Naive thymus-derived CD4-positive, alpha-beta T cell (primary cell): ENCODE measurements at regions of chr11 and their contacts with region 1.

Region 1: GRCh38 chr11:31369348-31370329 is at the starts of genes DCDC1 and DNAJC24:
- DNase-seq: peak; percentile 84 to 90 (median 89)
- ATAC-seq: peak; percentile 99
- H3K4me3 ChIP-seq: peak within 1 kb of the TSS; percentile 96
- H3K4me3 Mint-ChIP-seq: peak within 1 kb of the TSS; percentile 93 to 100 (median 98)
- H3K27ac ChIP-seq: peak within 1 kb of the TSS; percentile 81
- H3K27ac Mint-ChIP-seq: peak within 1 kb of the TSS; percentile 90 to 97 (median 95)
- H3K4me1 ChIP-seq: peaks cover 21 to 31% of the 10 kb centered on the region in 2 donors
- H3K4me1 Mint-ChIP-seq: peaks cover 28 to 82% (median 66%) of the 10 kb centered on the region in 7 donors
- H3K27me3 ChIP-seq: no peaks in the 10 kb centered on the region
- H3K27me3 Mint-ChIP-seq: peaks cover 0 to 18% (median 0%) of the 10 kb centered on the region in 5 donors
- total RNA-seq, gene DCDC1: 0.13 to 0.81 (median 0.26) TPM in 4 of 5 experiments, not detected in the other
- total RNA-seq, gene DNAJC24: 12.2 to 26.3 (median 18.6) TPM

Region 2: DNA sequence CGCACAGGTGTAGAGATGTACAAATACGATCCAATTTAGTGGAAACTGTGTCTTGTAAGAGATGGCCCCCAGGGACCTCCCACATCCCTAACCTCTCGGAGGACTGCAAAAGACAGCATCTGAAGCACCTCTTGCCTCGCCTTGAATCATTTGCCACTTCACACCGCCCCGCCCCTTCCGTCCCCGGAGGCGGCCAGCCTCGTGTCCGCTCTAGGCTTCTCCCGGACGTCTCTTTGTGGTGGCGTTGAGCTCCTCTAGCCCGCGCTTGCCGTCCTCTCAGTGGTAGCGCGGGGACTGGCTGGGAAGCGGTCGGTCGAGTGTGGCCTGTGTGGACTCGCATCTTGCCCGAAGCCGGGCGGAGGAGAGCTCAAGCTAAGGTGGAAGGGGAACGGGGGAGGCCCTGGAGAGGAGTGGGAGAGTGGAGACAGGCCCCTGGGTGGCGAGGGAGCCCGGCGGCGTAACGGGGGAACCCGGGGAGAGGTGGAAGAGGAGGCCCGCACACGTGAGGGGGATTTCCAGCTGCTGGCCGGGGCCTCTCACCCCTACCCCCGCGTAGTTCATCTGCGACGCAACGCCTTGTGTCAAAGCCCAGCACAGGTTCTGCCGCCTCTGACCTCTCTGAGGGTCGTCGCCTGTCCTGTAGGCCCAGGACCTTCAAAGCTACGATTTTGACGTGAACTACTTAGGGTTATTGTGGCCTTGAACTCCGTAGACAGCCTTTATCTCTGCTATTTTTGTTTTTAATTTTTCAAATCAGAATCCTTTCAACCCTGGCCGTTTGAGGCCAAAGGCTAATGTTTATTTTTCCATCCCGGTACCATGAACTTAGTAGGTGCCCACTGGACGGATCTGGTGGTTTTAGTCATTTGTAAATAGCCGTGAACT is 1046.6 kb before region 1 on chr11 and contains the start of gene ARL14EP:
- CTCF ChIA-PET with region 1: no interaction called
- POLR2A ChIA-PET with region 1: no interaction called
- intact Hi-C with region 1: loop called (anchors 1 to 5 kb)
- DNase-seq: peak; percentile 72 to 88 (median 81)
- ATAC-seq: peak; percentile 94
- H3K4me3 ChIP-seq: peak within 1 kb of the TSS; percentile 77
- H3K4me3 Mint-ChIP-seq: peak within 1 kb of the TSS; percentile 92 to 100 (median 99)
- H3K27ac ChIP-seq: peak within 1 kb of the TSS; percentile 90
- H3K27ac Mint-ChIP-seq: peak within 1 kb of the TSS; percentile 97 to 100 (median 98)
- H3K4me1 ChIP-seq: peaks cover 28 to 32% of the 10 kb centered on the region in 2 donors
- H3K4me1 Mint-ChIP-seq: peaks cover 32 to 59% (median 55%) of the 10 kb centered on the region in 7 donors
- H3K27me3 ChIP-seq: no peaks in the 10 kb centered on the region
- H3K27me3 Mint-ChIP-seq: peaks cover 0 to 19% (median 14%) of the 10 kb centered on the region in 5 donors
- total RNA-seq, gene ARL14EP: 20.8 to 45.8 (median 43.5) TPM

Region 3: DNA sequence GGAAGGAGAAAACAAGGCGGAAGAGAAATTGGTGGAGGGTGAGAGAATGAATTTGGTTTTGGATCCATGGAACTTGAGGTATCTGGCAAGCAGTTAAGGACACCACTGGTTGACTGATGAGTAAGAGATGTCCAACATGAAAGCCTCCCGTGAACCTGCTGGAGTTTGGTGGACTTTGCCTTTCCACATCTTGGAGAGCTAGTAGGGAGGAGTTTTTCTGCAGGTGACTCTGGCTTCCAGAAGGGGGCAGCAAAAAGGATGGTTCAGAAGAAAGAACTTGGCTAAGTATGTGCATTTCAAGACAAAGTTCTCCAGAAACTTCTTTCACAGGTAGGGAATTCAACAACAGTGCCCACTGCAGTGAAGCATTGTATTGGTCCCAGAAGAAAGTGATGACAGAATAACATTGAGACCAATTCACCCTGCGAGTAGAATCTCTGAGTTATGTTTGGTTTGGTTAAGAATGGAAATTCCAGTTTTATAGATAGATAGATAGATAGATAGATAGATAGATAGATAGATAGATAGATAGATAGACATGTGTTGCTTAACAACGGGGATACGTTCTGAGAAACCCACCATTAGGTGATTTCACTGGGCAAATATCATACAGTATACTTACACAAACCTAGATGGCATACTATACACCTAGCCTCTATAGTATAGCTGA is 28.6 kb before region 1 on chr11:
- CTCF ChIA-PET with region 1: interaction called, 7 read pairs
- POLR2A ChIA-PET with region 1: interaction called, 4 read pairs
- intact Hi-C with region 1: loop called in 1 of 2 experiments (anchors 1 kb)
- DNase-seq: peak in 5 of 9 donors; percentile 9 to 24 (median 13)
- ATAC-seq: no peak
- H3K4me3 ChIP-seq: no peak overlapping the region
- H3K4me3 Mint-ChIP-seq: no peak overlapping the region
- H3K27ac ChIP-seq: no peak overlapping the region
- H3K27ac Mint-ChIP-seq: no peak overlapping the region
- H3K4me1 ChIP-seq: no peaks in the 10 kb centered on the region
- H3K4me1 Mint-ChIP-seq: peaks cover 0 to 3% (median 0%) of the 10 kb centered on the region in 7 donors
- H3K27me3 ChIP-seq: no peaks in the 10 kb centered on the region
- H3K27me3 Mint-ChIP-seq: peaks cover 5 to 27% (median 18%) of the 10 kb centered on the region in 5 donors

Region 4: GRCh38 chr11:31509429-31510345 is 140.0 kb after region 1 on chr11 and contains the starts of genes ELP4 and IMMP1L:
- CTCF ChIA-PET with region 1: no interaction called
- POLR2A ChIA-PET with region 1: interaction called, 4 read pairs
- intact Hi-C with region 1: loop called (anchors 1 kb)
- DNase-seq: peak; percentile 86 to 97 (median 95)
- ATAC-seq: peak; percentile 100
- H3K4me3 ChIP-seq: peak within 1 kb of the TSS; percentile 85
- H3K4me3 Mint-ChIP-seq: peak within 1 kb of the TSS; percentile 89 to 100 (median 99)
- H3K27ac ChIP-seq: peak within 1 kb of the TSS; percentile 79
- H3K27ac Mint-ChIP-seq: peak within 1 kb of the TSS; percentile 92 to 100 (median 98)
- H3K4me1 ChIP-seq: peaks cover 13 to 14% of the 10 kb centered on the region in 2 donors
- H3K4me1 Mint-ChIP-seq: peaks cover 21 to 70% (median 49%) of the 10 kb centered on the region in 7 donors
- H3K27me3 ChIP-seq: no peaks in the 10 kb centered on the region
- H3K27me3 Mint-ChIP-seq: peaks cover 0 to 2% (median 0%) of the 10 kb centered on the region in 5 donors
- total RNA-seq, gene ELP4: 16.8 to 23.2 (median 21.2) TPM
- total RNA-seq, gene IMMP1L: 9.4 to 20.0 (median 16.1) TPM

Region 5: GRCh38 chr11:32090545-32091373 is 721.1 kb after region 1 on chr11 and contains the start of gene RCN1:
- CTCF ChIA-PET with region 1: no interaction called
- POLR2A ChIA-PET with region 1: no interaction called
- intact Hi-C with region 1: loop called (anchors 1 to 2 kb)
- DNase-seq: peak in 3 of 9 donors; percentile 14 to 64 (median 54)
- ATAC-seq: peak; percentile 66
- H3K4me3 ChIP-seq: peak within 1 kb of the TSS; percentile 83
- H3K4me3 Mint-ChIP-seq: peak within 1 kb of the TSS; percentile 74 to 89 (median 84)
- H3K27ac ChIP-seq: peak within 1 kb of the TSS; percentile 81
- H3K27ac Mint-ChIP-seq: peak within 1 kb of the TSS; percentile 74 to 90 (median 83)
- H3K4me1 ChIP-seq: peaks cover 4 to 8% of the 10 kb centered on the region in 2 donors
- H3K4me1 Mint-ChIP-seq: peaks cover 12 to 36% (median 24%) of the 10 kb centered on the region in 7 donors
- H3K27me3 ChIP-seq: peaks cover 0 to 4% of the 10 kb centered on the region in 2 donors
- H3K27me3 Mint-ChIP-seq: peaks cover 5 to 19% (median 16%) of the 10 kb centered on the region in 5 donors
- total RNA-seq, gene RCN1: 5.5 to 26.8 (median 9.6) TPM

Region 6: GRCh38 chr11:32858731-32859130 is 1489.1 kb after region 1 on chr11:
- CTCF ChIA-PET with region 1: no interaction called
- POLR2A ChIA-PET with region 1: no interaction called
- intact Hi-C with region 1: no loop called
- DNase-seq: no peak
- ATAC-seq: no peak
- H3K4me3 ChIP-seq: no peak overlapping the region
- H3K4me3 Mint-ChIP-seq: no peak overlapping the region
- H3K27ac ChIP-seq: no peak overlapping the region
- H3K27ac Mint-ChIP-seq: no peak overlapping the region
- H3K4me1 ChIP-seq: no peaks in the 10 kb centered on the region
- H3K4me1 Mint-ChIP-seq: peaks cover 0 to 2% (median 0%) of the 10 kb centered on the region in 7 donors
- H3K27me3 ChIP-seq: no peaks in the 10 kb centered on the region
- H3K27me3 Mint-ChIP-seq: peaks cover 6 to 26% (median 12%) of the 10 kb centered on the region in 5 donors